Activated CD4-positive, alpha-beta T cell treated with anti-CD3 and anti-CD28 coated beads, Interleukin-2, amount 10 ng/mL, durations not matched to agents 7 days and 5 days (primary cell): ENCODE measurements at regions of chr6 and their contacts with region 1.

Region 1: GRCh38 chr6:34027445-34027936 is 118.4 kb downstream of the GRM4 start:
- DNase-seq: peak; percentile 63
- H3K4me3 Mint-ChIP-seq: no peak overlapping the region
- H3K27ac Mint-ChIP-seq: no peak overlapping the region
- H3K4me1 Mint-ChIP-seq: no peaks in the 10 kb centered on the region
- H3K27me3 Mint-ChIP-seq: peaks cover 3% of the 10 kb centered on the region

Region 2: DNA sequence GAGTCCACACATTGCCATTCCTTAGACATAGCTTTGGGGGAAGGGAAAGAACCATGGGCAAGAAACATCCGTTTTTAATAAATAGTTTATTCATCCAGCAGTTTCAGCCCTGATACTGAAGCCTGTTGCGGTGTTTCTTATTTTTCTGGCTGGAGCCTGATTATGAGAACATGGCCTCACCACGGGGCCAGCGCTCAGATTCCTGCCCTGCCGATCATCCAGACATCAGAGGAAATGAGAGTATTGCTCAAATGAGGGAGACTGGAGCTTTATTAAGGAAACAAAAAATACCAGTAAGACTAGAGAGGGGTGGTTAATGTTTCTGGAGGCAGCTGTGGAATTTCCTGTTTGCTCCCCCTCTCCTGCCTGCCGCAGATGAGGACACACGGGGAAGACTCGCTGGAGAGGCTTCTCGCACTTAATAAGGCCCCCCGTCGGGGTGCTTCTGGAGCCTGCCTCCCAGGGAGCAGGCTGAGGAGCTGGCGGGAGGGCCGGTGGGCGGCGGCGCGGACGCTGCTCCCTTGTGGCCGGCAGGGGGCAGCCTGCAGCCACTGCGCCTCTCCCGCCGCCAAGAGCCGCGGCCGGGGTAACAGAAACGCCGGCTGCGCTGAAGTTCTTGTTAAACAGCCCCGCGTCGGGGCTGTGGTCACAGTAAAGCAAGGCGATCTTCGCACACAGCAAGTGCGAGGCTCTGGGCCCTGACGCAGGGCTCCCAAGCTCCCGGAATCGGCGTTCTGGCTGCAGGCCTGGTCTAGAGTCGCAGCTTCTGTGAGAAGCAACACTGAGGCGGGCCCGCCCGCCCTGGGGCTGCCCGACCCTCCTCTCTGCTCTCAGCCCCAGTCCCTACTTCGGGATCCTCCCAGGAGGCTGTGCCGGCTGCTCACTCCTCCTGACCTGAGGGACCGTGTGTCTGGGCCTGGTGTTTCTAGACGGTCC is 256.1 kb before region 1 on chr6:
- CTCF ChIA-PET with region 1: interaction called, 71 read pairs
- POLR2A ChIA-PET with region 1: no interaction called
- DNase-seq: peak; percentile 64
- H3K4me3 Mint-ChIP-seq: no peak overlapping the region
- H3K27ac Mint-ChIP-seq: no peak overlapping the region
- H3K4me1 Mint-ChIP-seq: peaks cover 5% of the 10 kb centered on the region
- H3K27me3 Mint-ChIP-seq: no peaks in the 10 kb centered on the region

Region 3: GRCh38 chr6:33860706-33861474 is 166.6 kb before region 1 on chr6:
- CTCF ChIA-PET with region 1: interaction called, 15 read pairs
- POLR2A ChIA-PET with region 1: no interaction called
- DNase-seq: peak; percentile 60
- H3K4me3 Mint-ChIP-seq: no peak overlapping the region
- H3K27ac Mint-ChIP-seq: peak overlapping the region; percentile 50
- H3K4me1 Mint-ChIP-seq: peaks cover 54% of the 10 kb centered on the region
- H3K27me3 Mint-ChIP-seq: peaks cover 28% of the 10 kb centered on the region

Region 4: GRCh38 chr6:34196126-34196830 is 168.8 kb after region 1 on chr6:
- CTCF ChIA-PET with region 1: no interaction called
- POLR2A ChIA-PET with region 1: no interaction called
- DNase-seq: peak; percentile 88
- H3K4me3 Mint-ChIP-seq: peak overlapping the region; percentile 73
- H3K27ac Mint-ChIP-seq: peak overlapping the region; percentile 78
- H3K4me1 Mint-ChIP-seq: peaks cover 10% of the 10 kb centered on the region
- H3K27me3 Mint-ChIP-seq: peaks cover 2% of the 10 kb centered on the region